HEK293 (cell line): ENCODE measurements at regions of chr18 and their contacts with region 1.

Region 1: DNA sequence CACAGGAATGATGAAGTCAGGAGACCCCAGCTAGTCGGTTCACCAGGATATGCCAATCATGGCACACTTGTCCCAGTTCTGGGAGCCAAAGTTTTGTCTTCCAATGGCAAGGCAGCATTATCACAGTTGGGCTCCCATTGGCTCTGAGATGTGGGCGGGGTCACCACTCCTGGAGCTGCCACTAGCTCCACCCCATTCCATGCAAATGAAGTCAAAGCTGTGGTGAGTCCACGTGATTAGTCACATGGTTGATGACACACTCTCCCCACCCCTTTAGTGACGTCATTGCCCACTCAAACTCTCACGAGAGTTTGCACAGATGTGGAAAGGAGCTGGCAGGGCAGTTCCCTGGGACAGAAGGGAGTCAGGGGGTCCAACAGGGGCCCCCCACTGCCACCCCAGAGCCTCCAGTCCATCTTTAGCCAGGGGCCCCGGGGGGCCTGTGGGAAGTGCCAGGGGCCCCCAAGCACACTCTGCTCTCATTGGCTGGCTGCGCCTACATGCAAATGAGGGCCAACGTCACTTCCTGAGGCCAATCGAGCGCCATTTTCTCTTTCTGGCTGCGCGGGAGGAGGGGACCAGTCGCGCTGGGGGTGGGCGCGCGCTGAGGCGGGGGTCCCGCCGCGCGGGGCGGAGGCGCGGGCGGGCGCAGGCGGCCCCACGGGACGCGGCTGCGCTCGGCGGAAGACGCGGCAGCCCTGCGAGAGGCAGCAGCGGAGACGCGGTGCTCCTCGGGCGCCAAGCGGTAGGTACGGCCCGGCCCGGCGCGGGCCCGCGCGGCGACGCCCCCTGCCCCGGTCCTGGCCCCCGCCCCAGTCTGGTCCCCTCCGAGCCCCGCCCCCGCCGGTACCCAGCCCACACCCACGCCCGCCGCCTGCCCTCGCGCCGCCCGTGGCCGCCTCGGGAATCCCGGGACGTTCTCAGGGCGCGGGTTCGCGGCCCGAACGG is at the start of gene ADNP2:
- H3K4me3 ChIP-seq: peak within 1 kb of the TSS; percentile 72
- H3K27ac ChIP-seq: peak within 1 kb of the TSS; percentile 62
- H3K4me1 ChIP-seq: peaks cover 24% of the 10 kb centered on the region
- CTCF ChIP-seq: no peak

Region 2: GRCh38 chr18:79988451-79989194 is 120.4 kb before region 1 on chr18 and contains the start of gene TXNL4A:
- CTCF ChIA-PET with region 1: no interaction called
- POLR2A ChIA-PET with region 1: interaction called, 10 read pairs
- H3K4me3 ChIP-seq: peak within 1 kb of the TSS; percentile 82
- H3K27ac ChIP-seq: peak within 1 kb of the TSS; percentile 91
- H3K4me1 ChIP-seq: peaks cover 7% of the 10 kb centered on the region
- CTCF ChIP-seq: no peak

Region 3: GRCh38 chr18:80034068-80034851 is 74.7 kb before region 1 on chr18 and contains the start of gene RBFA:
- CTCF ChIA-PET with region 1: interaction called, 4 read pairs
- POLR2A ChIA-PET with region 1: interaction called, 22 read pairs
- H3K4me3 ChIP-seq: peak within 1 kb of the TSS; percentile 66
- H3K27ac ChIP-seq: peak within 1 kb of the TSS; percentile 74
- H3K4me1 ChIP-seq: peaks cover 9% of the 10 kb centered on the region; the same call in 1 of the 2 replicates
- CTCF ChIP-seq: peak; percentile 97